ENCODE measurements at regions of chr5 and their contacts with region 1.

Region 1: DNA sequence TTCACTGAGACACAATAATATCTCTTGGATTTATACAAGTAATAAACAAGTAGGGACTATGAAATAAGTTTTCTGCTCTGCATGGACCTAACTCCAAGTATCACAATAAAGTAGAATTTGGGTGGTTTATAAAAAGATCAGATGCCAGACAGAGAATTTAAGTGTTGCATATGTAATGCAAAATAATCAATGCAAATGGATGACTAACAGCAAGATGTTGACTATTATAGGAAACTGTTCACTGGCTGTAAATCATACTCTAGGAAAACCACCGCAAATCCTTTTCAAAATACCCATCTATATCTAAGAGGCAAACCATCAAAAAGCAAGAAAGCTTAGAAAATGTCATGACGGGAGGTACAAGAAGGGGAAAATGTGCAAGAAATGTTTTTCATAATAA is 539.8 kb upstream of the FAM174A start:
- DNase-seq: no peak
- ATAC-seq: no peak
- H3K4me3 ChIP-seq: no peak overlapping the region
- H3K27ac ChIP-seq: no peak overlapping the region
- H3K4me1 ChIP-seq: no peaks in the 10 kb centered on the region
- H3K27me3 ChIP-seq: no peaks in the 10 kb centered on the region
- CTCF ChIP-seq: no peak
- EP300 ChIP-seq: no peak
- POLR2A ChIP-seq: no peak
- RAD21 ChIP-seq: no peak

Region 2: GRCh38 chr5:98016771-98017170 is 1978.6 kb before region 1 on chr5:
- CTCF ChIA-PET with region 1: no interaction called
- POLR2A ChIA-PET with region 1: no interaction called
- in situ Hi-C with region 1: no loop called
- intact Hi-C with region 1: no loop called
- DNase-seq: no peak
- ATAC-seq: no peak
- H3K4me3 ChIP-seq: no peak overlapping the region
- H3K27ac ChIP-seq: no peak overlapping the region
- H3K4me1 ChIP-seq: no peaks in the 10 kb centered on the region
- H3K27me3 ChIP-seq: no peaks in the 10 kb centered on the region
- CTCF ChIP-seq: no peak
- EP300 ChIP-seq: no peak
- POLR2A ChIP-seq: no peak
- RAD21 ChIP-seq: no peak

Region 3: GRCh38 chr5:99866740-99867139 is 128.7 kb before region 1 on chr5:
- CTCF ChIA-PET with region 1: no interaction called
- POLR2A ChIA-PET with region 1: no interaction called
- in situ Hi-C with region 1: no loop called
- intact Hi-C with region 1: no loop called
- DNase-seq: no peak
- ATAC-seq: no peak
- H3K4me3 ChIP-seq: no peak overlapping the region
- H3K27ac ChIP-seq: no peak overlapping the region
- H3K4me1 ChIP-seq: no peaks in the 10 kb centered on the region
- H3K27me3 ChIP-seq: no peaks in the 10 kb centered on the region
- CTCF ChIP-seq: no peak
- EP300 ChIP-seq: no peak
- POLR2A ChIP-seq: no peak
- RAD21 ChIP-seq: no peak

Region 4: DNA sequence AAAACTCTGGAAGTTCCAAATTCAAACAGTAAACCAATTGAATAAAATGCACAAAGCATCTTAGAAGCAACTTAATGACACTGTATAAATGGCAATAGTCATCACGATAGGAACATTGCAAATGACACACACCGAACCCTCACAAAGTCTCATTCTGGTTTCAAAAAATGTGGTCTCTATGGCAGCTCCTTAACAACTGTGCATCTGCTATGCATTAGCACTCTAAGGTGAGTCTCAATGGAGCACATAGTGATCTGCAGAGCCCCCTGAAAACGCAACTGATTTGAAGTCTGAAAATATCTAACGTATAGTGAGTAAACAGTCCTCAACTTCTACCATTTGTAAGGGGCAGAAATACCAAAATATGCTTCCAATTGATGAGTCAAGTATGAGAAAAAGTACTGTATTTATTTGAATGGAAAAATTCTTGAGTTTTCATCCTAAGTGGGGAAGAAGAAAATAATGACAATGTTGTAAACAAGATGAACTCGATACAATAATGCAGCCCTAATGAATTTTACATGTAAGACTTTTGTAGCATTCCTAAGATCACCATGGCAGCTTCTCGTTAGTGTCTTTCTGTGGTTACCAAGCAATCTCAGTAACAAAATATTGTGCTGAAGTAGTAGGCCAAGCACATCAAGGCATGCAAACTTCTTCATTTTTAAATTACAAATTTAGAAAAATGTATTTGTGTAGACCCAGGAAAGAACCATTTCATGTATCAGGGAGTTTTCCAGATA is 22.3 kb after region 1 on chr5:
- CTCF ChIA-PET with region 1: no interaction called
- POLR2A ChIA-PET with region 1: no interaction called
- in situ Hi-C with region 1: no loop called
- intact Hi-C with region 1: loop called (anchors 1 kb)
- DNase-seq: no peak
- ATAC-seq: no peak
- H3K4me3 ChIP-seq: no peak overlapping the region
- H3K27ac ChIP-seq: no peak overlapping the region
- H3K4me1 ChIP-seq: no peaks in the 10 kb centered on the region
- H3K27me3 ChIP-seq: no peaks in the 10 kb centered on the region
- CTCF ChIP-seq: no peak
- EP300 ChIP-seq: no peak
- POLR2A ChIP-seq: no peak
- RAD21 ChIP-seq: no peak

Region 5: DNA sequence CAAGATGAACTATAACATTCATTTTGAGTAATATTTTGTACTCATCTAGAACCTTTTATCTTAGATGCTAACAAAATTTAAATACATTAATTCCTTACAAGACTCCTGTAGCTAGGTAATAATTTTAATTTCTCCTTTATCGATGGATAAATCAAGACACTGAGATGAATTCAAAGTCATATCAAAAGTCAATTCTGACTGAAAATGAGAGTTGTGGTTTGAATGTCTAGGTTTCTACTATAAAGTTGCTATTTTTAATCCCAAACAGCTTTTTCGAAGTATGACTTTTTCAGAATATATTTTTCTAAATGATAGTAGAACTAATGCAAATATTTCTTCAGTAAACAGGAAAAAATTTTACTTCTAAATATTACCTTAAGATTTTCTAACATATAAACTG is 48.1 kb after region 1 on chr5:
- CTCF ChIA-PET with region 1: no interaction called
- POLR2A ChIA-PET with region 1: no interaction called
- in situ Hi-C with region 1: no loop called
- intact Hi-C with region 1: no loop called
- DNase-seq: no peak
- ATAC-seq: no peak
- H3K4me3 ChIP-seq: no peak overlapping the region
- H3K27ac ChIP-seq: no peak overlapping the region
- H3K4me1 ChIP-seq: no peaks in the 10 kb centered on the region
- H3K27me3 ChIP-seq: no peaks in the 10 kb centered on the region
- CTCF ChIP-seq: no peak
- EP300 ChIP-seq: no peak
- POLR2A ChIP-seq: no peak
- RAD21 ChIP-seq: no peak

Region 6: GRCh38 chr5:100505984-100506670 is 510.7 kb after region 1 on chr5:
- CTCF ChIA-PET with region 1: no interaction called
- POLR2A ChIA-PET with region 1: no interaction called
- in situ Hi-C with region 1: no loop called
- intact Hi-C with region 1: no loop called
- DNase-seq: no peak
- ATAC-seq: no peak
- H3K4me3 ChIP-seq: no peak overlapping the region
- H3K27ac ChIP-seq: no peak overlapping the region
- H3K4me1 ChIP-seq: no peaks in the 10 kb centered on the region
- H3K27me3 ChIP-seq: no peaks in the 10 kb centered on the region
- CTCF ChIP-seq: no peak
- EP300 ChIP-seq: no peak
- POLR2A ChIP-seq: no peak
- RAD21 ChIP-seq: no peak

Measured in K562 (cell line).